ENCODE measurements at regions of chrX and their contacts with region 1.

Region 1: GRCh38 chrX:100674705-100675104 is 30.7 kb downstream of the SRPX2 start:
- DNase-seq: no peak
- H3K4me3 Mint-ChIP-seq: no peak overlapping the region
- H3K27ac Mint-ChIP-seq: no peak overlapping the region
- H3K4me1 Mint-ChIP-seq: peaks cover 10% of the 10 kb centered on the region
- H3K27me3 Mint-ChIP-seq: no peaks in the 10 kb centered on the region
- CTCF ChIP-seq: no peak

Region 2: GRCh38 chrX:100512471-100512870 is 162.2 kb before region 1 on chrX:
- CTCF ChIA-PET with region 1: no interaction called
- intact Hi-C with region 1: no loop called
- DNase-seq: no peak
- H3K4me3 Mint-ChIP-seq: no peak overlapping the region
- H3K27ac Mint-ChIP-seq: no peak overlapping the region
- H3K4me1 Mint-ChIP-seq: no peaks in the 10 kb centered on the region
- H3K27me3 Mint-ChIP-seq: peaks cover 16% of the 10 kb centered on the region
- CTCF ChIP-seq: peak; percentile 35

Region 3: DNA sequence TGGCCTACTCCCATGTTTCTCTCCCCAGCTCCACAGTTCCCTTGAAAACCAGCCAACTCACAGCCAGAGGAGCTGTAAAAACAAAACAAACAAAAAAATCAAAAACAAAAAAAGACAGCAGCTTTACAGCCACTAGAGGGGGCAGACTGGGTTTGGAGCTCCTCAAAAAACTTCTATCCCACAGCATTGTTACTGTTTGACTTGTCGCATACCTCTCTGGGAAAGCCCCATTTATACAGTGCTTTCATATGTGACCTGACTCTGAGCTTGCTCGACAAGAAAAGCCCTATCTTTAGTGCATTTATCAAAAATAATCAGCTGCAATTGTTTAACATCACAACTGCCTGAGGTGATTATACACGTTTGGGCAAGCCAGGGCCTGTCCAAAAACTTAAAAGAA is 59.7 kb before region 1 on chrX:
- CTCF ChIA-PET with region 1: interaction called, 18 read pairs
- intact Hi-C with region 1: no loop called
- DNase-seq: peak; percentile 46
- H3K4me3 Mint-ChIP-seq: no peak overlapping the region
- H3K27ac Mint-ChIP-seq: no peak overlapping the region
- H3K4me1 Mint-ChIP-seq: peaks cover 7% of the 10 kb centered on the region
- H3K27me3 Mint-ChIP-seq: no peaks in the 10 kb centered on the region
- CTCF ChIP-seq: peak; percentile 25

Region 4: DNA sequence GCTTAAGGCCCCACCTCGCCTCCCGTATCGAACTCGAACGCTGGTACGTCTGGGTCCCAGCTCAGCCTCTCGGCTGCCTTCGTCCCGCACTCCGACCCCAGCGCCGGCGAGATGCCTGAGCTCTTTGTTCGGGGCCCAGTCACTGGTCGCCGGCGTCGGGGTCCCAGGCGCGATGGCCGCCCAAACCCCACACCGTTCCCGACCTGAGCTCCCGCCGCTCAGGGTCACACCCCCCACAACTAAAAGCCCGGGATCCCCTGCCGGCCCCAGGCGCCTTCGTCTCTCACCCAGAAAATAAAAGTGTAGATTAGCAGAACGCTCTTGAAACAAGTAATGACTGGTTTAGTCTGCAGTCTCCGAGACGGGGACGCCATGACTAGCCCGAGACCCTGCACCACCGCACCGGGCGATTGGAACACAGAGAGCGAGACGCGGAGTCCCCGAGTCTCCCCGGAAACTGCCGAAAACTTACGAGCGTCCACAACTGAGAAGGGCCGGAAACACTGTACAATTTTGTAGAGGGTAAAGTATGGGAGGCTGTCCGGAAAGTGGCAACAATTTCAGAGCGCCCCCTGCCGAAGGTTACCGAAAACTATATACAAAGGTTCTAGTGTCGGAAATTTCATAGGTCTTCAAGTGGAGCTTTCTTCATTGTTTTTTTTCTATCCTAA is 38.2 kb before region 1 on chrX and contains the start of gene TSPAN6:
- CTCF ChIA-PET with region 1: interaction called, 11 read pairs
- intact Hi-C with region 1: no loop called
- DNase-seq: peak; percentile 90
- H3K4me3 Mint-ChIP-seq: peak within 1 kb of the TSS; percentile 74
- H3K27ac Mint-ChIP-seq: peak within 1 kb of the TSS; percentile 64
- H3K4me1 Mint-ChIP-seq: peaks cover 4% of the 10 kb centered on the region
- H3K27me3 Mint-ChIP-seq: no peaks in the 10 kb centered on the region
- CTCF ChIP-seq: peak; percentile 44
- total RNA-seq, gene TSPAN6: 69.1 and 70.6 TPM in 2 replicates

Region 5: DNA sequence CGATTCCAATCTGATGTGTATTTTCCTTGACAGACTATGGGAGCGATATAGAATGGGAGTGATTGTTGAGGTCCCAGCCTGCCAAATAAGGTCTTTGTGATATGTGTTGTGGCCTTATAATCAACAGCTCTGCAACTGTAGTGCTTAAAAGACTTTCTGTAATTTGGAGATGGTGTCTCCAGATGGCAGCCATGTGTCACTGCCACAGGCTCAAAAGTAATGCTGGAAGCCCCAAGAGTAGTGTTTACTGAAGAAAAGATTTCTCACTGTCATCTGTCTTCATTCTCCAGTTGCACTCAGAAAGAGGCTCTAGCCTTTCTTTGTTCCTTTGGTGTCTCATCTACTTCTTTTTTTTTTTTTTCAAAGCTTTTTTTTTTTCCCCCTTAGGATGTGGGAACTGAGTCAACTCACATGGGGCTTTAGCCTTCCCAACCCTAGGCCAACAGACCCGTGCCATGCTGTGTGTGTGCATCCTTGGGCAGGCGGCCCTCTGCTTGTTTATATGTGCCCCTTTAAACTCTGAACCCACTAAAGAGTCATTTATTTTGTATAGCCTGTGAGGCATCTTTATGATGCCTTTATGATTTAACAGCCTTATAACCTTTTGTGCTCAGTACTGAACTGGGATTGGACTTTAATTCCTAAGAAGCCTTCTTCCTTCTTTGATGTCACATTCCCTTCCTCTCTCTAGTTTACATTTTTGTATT is 15.1 kb before region 1 on chrX:
- CTCF ChIA-PET with region 1: interaction called, 11 read pairs
- intact Hi-C with region 1: no loop called
- DNase-seq: no peak
- H3K4me3 Mint-ChIP-seq: no peak overlapping the region
- H3K27ac Mint-ChIP-seq: no peak overlapping the region
- H3K4me1 Mint-ChIP-seq: peaks cover 25% of the 10 kb centered on the region
- H3K27me3 Mint-ChIP-seq: no peaks in the 10 kb centered on the region
- CTCF ChIP-seq: no peak

Region 6: GRCh38 chrX:100768679-100769338 is 94.1 kb after region 1 on chrX:
- CTCF ChIA-PET with region 1: interaction called, 30 read pairs
- intact Hi-C with region 1: no loop called
- DNase-seq: peak; percentile 85
- H3K4me3 Mint-ChIP-seq: no peak overlapping the region
- H3K27ac Mint-ChIP-seq: peak overlapping the region; percentile 73
- H3K4me1 Mint-ChIP-seq: peaks cover 7% of the 10 kb centered on the region
- H3K27me3 Mint-ChIP-seq: no peaks in the 10 kb centered on the region
- CTCF ChIP-seq: peak; percentile 98